MCF 10A (cell line): ENCODE measurements at regions of chr2 and their contacts with region 1.

Region 1: GRCh38 chr2:109128048-109128465 is 948 bp upstream of the SH3RF3 start:
- DNase-seq: peak; percentile 88
- H3K4me3 Mint-ChIP-seq: peak overlapping the region; percentile 92
- H3K27ac Mint-ChIP-seq: no peak overlapping the region
- H3K4me1 Mint-ChIP-seq: peaks cover 58% of the 10 kb centered on the region
- H3K27me3 Mint-ChIP-seq: no peaks in the 10 kb centered on the region
- CTCF ChIP-seq: peak; percentile 89

Region 2: DNA sequence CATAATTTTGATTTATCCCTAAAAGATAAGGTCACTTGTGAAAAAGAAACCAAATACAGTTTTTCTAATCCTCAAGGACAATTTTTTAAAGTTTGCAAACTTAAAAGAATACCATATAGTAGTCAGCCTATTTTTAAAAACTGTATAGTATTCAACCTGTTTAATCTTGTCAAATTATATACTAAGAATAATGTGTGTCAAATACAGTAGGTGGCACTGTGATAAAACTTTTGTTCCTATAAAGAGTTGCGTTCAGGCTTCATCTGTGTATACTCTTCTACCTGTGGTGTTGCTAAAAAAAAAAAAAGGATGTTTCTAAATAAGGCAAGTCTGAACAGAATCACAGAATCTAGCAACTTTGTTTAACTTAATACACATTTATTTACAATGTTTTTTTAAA is 272.9 kb before region 1 on chr2:
- CTCF ChIA-PET with region 1: interaction called, 4 read pairs
- POLR2A ChIA-PET with region 1: no interaction called
- intact Hi-C with region 1: loop called (anchors 2 kb)
- DNase-seq: peak; percentile 42
- H3K4me3 Mint-ChIP-seq: no peak overlapping the region
- H3K27ac Mint-ChIP-seq: no peak overlapping the region
- H3K4me1 Mint-ChIP-seq: no peaks in the 10 kb centered on the region
- H3K27me3 Mint-ChIP-seq: no peaks in the 10 kb centered on the region
- CTCF ChIP-seq: peak; percentile 30

Region 3: GRCh38 chr2:109173311-109174171 is 45.5 kb after region 1 on chr2:
- CTCF ChIA-PET with region 1: interaction called, 8 read pairs
- POLR2A ChIA-PET with region 1: interaction called, 11 read pairs
- intact Hi-C with region 1: loop called (anchors 5 kb)
- DNase-seq: peak; percentile 83
- H3K4me3 Mint-ChIP-seq: peak overlapping the region; percentile 18
- H3K27ac Mint-ChIP-seq: peak overlapping the region; percentile 55
- H3K4me1 Mint-ChIP-seq: peaks cover 63% of the 10 kb centered on the region
- H3K27me3 Mint-ChIP-seq: no peaks in the 10 kb centered on the region
- CTCF ChIP-seq: no peak

Region 4: GRCh38 chr2:109238580-109238979 is 110.5 kb after region 1 on chr2:
- CTCF ChIA-PET with region 1: interaction called, 4 read pairs
- POLR2A ChIA-PET with region 1: interaction called, 3 read pairs
- intact Hi-C with region 1: loop called (anchors 2 kb)
- DNase-seq: peak; percentile 97
- H3K4me3 Mint-ChIP-seq: peak overlapping the region; percentile 16
- H3K27ac Mint-ChIP-seq: peak overlapping the region; percentile 70
- H3K4me1 Mint-ChIP-seq: peaks cover 57% of the 10 kb centered on the region
- H3K27me3 Mint-ChIP-seq: no peaks in the 10 kb centered on the region
- CTCF ChIP-seq: no peak

Region 5: DNA sequence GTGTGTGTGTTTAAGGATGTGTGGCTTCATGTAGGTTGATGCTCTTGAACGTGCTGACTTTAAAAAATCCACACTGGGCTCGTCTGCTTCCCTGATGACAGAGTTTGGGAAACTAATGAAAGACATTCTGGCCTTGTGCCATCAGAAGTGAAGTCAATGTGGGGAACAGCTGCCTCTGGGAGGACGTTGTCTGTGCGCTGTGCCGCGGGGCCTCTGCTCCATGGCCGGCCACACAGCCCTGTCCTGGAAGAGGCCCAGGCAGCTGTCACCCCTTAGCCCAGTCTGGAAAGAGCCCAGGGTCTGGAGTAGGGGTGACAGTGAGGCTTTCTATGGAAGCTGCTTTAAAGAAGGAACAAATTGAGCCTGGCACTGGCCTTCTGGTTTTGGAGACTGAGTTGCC is 156.8 kb after region 1 on chr2:
- CTCF ChIA-PET with region 1: no interaction called
- POLR2A ChIA-PET with region 1: no interaction called
- intact Hi-C with region 1: no loop called
- DNase-seq: peak; percentile 51
- H3K4me3 Mint-ChIP-seq: no peak overlapping the region
- H3K27ac Mint-ChIP-seq: no peak overlapping the region
- H3K4me1 Mint-ChIP-seq: peaks cover 32% of the 10 kb centered on the region
- H3K27me3 Mint-ChIP-seq: no peaks in the 10 kb centered on the region
- CTCF ChIP-seq: no peak

Region 6: DNA sequence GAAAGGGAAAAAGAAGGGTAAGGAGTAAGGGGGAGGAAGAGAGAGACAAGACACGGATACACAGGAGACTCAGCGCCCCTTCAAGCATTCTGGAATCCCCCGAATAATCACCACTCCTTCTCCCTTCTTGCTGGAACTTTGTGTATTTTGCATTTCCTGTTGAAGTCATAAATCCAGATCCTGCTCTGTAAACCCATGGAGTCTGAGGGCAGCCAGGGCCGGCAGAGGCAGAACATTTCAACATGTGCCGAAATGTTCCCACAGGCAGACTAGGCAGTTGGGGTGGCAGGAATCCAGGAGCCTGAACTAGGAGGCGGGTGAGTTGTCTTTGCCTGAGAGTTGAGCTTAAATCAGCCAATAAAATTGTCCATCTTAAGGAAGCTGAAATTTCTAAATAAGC is 194.1 kb after region 1 on chr2:
- CTCF ChIA-PET with region 1: interaction called, 4 read pairs
- POLR2A ChIA-PET with region 1: interaction called, 4 read pairs
- intact Hi-C with region 1: loop called (anchors 5 kb)
- DNase-seq: peak; percentile 97
- H3K4me3 Mint-ChIP-seq: peak overlapping the region; percentile 63
- H3K27ac Mint-ChIP-seq: peak overlapping the region; percentile 71
- H3K4me1 Mint-ChIP-seq: peaks cover 51% of the 10 kb centered on the region
- H3K27me3 Mint-ChIP-seq: no peaks in the 10 kb centered on the region
- CTCF ChIP-seq: no peak

Region 7: GRCh38 chr2:109497463-109497862 is 369.4 kb after region 1 on chr2:
- CTCF ChIA-PET with region 1: interaction called, 6 read pairs
- POLR2A ChIA-PET with region 1: no interaction called
- intact Hi-C with region 1: loop called (anchors 1 kb)
- DNase-seq: no peak
- H3K4me3 Mint-ChIP-seq: no peak overlapping the region
- H3K27ac Mint-ChIP-seq: no peak overlapping the region
- H3K4me1 Mint-ChIP-seq: no peaks in the 10 kb centered on the region
- H3K27me3 Mint-ChIP-seq: no peaks in the 10 kb centered on the region
- CTCF ChIP-seq: no peak